ENCODE measurements at regions of chr11 and their contacts with region 1.

Region 1: DNA sequence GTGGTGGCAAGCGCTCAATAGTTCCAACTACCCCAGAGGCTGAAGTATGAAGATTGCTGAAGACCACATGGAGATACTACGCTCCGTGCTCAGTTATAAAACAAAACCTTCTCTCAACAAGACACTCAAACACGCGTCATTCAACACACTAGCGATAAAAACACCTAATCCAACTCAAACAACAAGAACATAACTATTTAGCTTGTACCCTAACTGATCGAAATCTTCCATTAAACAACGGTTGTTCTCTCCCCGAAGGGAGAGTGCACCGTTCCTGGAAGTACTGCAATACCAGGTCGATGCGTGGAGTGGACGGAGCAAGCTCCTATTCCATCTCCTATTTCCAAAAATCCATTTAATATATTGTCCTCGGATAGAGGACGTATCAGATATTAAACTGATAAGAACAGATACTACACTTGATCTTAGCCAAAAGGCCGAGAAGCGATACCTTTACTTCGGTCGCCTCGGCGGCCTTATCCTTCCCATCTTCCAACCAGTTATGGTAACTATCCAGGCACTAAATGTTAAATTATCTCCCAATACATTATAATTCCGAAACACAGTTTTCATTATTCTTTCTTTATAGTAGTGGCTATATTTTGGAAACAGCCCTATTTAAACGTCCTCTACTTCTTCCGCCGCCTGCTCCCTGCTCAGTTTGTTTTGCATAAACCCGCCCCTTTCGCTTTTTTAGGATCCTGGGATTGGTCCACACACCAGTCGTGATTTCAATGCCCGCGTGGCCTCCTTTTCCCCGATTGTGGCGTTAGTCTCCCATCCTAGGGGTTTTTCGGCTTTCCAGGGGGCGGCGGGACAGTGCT is 2.2 kb upstream of the WDR74 start:
- DNase-seq: peak; percentile 92

Region 2: GRCh38 chr11:62855571-62856332 is 14.2 kb after region 1 on chr11:
- intact Hi-C with region 1: loop called (anchors 1 kb)
- DNase-seq: peak; percentile 98

Region 3: GRCh38 chr11:62880803-62881578 is 39.4 kb after region 1 on chr11 and contains the start of gene SLC3A2:
- intact Hi-C with region 1: loop called (anchors 2 kb)
- DNase-seq: peak; percentile 94
- total RNA-seq, gene SLC3A2: 38.6 TPM

Region 4: GRCh38 chr11:62931499-62932278 is 90.1 kb after region 1 on chr11:
- intact Hi-C with region 1: no loop called
- DNase-seq: peak; percentile 49

Region 5: GRCh38 chr11:62965574-62965973 is 124.0 kb after region 1 on chr11:
- intact Hi-C with region 1: no loop called
- DNase-seq: no peak